ENCODE measurements at regions of chr3 and their contacts with region 1.

Region 1: DNA sequence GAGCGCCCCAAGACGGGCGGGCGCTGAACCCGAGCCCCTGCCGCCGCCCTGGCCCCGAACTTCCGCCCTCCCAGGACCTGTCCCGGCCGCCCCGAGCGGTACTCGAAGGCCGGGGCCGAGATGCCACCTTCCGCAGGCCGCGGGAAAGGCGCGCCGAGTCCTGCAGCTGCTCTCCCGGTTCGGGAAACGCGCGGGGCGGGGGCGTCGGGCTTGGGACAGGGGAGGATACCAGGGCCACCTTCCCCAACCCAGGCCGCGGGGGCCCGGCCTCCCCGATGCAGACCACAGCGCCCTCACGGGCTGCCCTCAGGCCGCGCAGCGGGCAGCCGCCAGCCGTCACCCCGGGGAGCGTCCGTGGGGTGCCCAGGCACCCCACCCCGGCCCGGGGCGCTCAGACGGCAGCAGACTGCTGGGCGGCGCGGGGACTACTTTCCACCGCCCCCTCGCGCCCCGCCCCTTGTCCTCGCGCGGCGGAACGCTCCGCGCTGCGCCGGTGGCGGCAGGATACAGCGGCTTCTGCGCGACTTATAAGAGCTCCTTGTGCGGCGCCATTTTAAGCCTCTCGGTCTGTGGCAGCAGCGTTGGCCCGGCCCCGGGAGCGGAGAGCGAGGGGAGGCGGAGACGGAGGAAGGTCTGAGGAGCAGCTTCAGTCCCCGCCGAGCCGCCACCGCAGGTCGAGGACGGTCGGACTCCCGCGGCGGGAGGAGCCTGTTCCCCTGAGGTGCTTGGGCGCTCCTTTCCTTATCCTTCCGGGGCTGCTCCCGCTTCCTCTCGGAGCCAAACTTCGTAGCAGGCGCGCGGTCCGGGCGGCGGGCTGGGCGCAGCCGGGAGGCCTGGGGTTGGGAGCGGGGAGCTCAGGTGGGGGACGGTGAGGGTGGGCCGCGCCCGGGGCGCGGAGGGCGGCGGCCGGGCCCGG is at the start of gene CTNNB1:
- DNase-seq: peak; percentile 94 to 97 (median 95)
- ATAC-seq: peak; percentile 73 to 96 (median 92)
- H3K4me3 ChIP-seq: peak within 1 kb of the TSS; percentile 47 to 90 (median 84)
- H3K27ac ChIP-seq: peak within 1 kb of the TSS; percentile 95 to 99 (median 98)
- H3K4me1 ChIP-seq: peaks cover 5 to 41% (median 31%) of the 10 kb centered on the region in 12 donors
- H3K27me3 ChIP-seq: no peaks in the 10 kb centered on the region
- CTCF ChIP-seq: peak in 5 of 12 donors; percentile 13 to 33 (median 27)
- POLR2A ChIP-seq: peak in 1 of 2 donors; percentile 93
- total RNA-seq, gene CTNNB1: 145 to 301 (median 208) TPM

Region 2: DNA sequence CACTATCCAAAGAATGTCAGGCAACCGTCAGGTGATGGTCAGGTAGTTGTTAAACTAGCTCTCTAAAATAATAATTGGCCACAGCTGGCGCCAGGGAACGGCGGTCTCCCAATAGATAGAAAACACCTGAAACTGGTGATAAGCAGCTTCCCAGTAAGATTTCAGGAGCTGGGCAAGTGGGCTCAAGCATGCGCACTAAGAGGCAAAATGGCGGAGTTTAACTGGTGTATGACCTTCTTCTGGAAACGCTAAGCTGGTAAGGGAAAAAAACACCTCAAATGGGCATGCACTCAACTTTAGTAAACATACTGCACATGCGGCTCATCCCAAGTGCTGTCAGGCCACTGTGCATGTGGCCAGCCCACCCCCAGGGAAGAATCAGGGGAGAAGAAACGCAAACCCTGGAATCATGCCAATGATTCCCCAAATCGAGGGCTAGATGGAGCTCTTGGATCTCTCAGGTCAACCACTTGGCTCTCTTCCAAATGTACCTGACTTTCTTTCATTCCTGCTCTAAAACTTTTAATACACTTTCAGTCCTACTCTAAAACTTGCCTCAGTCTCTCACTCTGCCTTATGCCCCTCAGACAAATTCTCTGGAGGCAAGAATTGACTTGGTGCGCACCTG is 479.4 kb before region 1 on chr3:
- intact Hi-C with region 1: loop called in 5 of 10 experiments (anchors 5 to 10 kb)
- DNase-seq: no peak
- ATAC-seq: no peak
- H3K4me3 ChIP-seq: no peak overlapping the region
- H3K27ac ChIP-seq: no peak overlapping the region
- H3K4me1 ChIP-seq: peaks cover 0 to 8% (median 0%) of the 10 kb centered on the region in 12 donors
- H3K27me3 ChIP-seq: no peaks in the 10 kb centered on the region
- CTCF ChIP-seq: peak in 11 of 12 donors; percentile 25 to 62 (median 40)
- POLR2A ChIP-seq: no peak

Region 3: GRCh38 chr3:40847551-40847992 is 351.6 kb before region 1 on chr3:
- intact Hi-C with region 1: loop called in 3 of 10 experiments (anchors 10 kb)
- DNase-seq: peak in 3 of 5 donors; percentile 21 to 50 (median 38)
- ATAC-seq: peak; percentile 90 to 92 (median 90)
- H3K4me3 ChIP-seq: no peak overlapping the region
- H3K27ac ChIP-seq: no peak overlapping the region
- H3K4me1 ChIP-seq: peaks cover 0 to 17% (median 3%) of the 10 kb centered on the region in 12 donors
- H3K27me3 ChIP-seq: no peaks in the 10 kb centered on the region
- CTCF ChIP-seq: peak in 10 of 12 donors; percentile 23 to 54 (median 34)
- POLR2A ChIP-seq: no peak

Region 4: GRCh38 chr3:40971191-40972168 is 227.7 kb before region 1 on chr3:
- intact Hi-C with region 1: loop called in 8 of 10 experiments (anchors 5 to 10 kb)
- DNase-seq: peak; percentile 64 to 85 (median 76)
- ATAC-seq: peak; percentile 80 to 96 (median 94)
- H3K4me3 ChIP-seq: no peak overlapping the region
- H3K27ac ChIP-seq: peak overlapping the region; percentile 35 to 88 (median 72)
- H3K4me1 ChIP-seq: peaks cover 8 to 63% (median 54%) of the 10 kb centered on the region in 12 donors
- H3K27me3 ChIP-seq: no peaks in the 10 kb centered on the region
- CTCF ChIP-seq: peak in 1 of 12 donors; percentile 13
- POLR2A ChIP-seq: no peak

Region 5: DNA sequence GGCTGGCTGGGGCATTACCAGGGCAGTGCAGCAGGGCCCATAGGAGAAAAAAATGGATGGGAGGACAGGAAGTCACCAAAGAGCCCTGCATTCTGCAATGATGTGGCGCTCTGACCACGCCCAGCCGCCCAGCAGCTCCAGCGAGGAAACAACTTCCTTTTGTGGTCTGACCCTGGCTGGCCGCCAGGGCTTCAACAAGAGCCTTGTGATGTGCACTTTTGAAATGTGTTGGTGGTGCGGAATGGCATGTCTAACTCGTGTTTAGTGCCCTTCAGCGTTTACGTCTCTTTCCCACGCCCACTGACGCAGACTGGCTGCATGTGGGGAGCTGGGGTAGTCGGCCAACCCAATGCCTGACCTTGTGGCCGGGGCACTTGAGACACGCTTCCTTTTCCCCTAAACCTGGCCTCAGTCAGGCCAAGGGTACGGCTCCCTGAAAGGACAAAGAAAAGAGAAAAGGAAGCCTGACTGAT is 81.8 kb before region 1 on chr3:
- intact Hi-C with region 1: loop called in 4 of 10 experiments (anchors 5 kb)
- DNase-seq: peak; percentile 90 to 95 (median 95)
- ATAC-seq: peak; percentile 87 to 97 (median 95)
- H3K4me3 ChIP-seq: peak overlapping the region in 1 of 12 donors; percentile 5
- H3K27ac ChIP-seq: peak overlapping the region in 10 of 12 donors; percentile 2 to 79 (median 46)
- H3K4me1 ChIP-seq: peaks cover 5 to 36% (median 22%) of the 10 kb centered on the region in 12 donors
- H3K27me3 ChIP-seq: no peaks in the 10 kb centered on the region
- CTCF ChIP-seq: peak in 1 of 12 donors; percentile 2
- POLR2A ChIP-seq: no peak

Region 6: DNA sequence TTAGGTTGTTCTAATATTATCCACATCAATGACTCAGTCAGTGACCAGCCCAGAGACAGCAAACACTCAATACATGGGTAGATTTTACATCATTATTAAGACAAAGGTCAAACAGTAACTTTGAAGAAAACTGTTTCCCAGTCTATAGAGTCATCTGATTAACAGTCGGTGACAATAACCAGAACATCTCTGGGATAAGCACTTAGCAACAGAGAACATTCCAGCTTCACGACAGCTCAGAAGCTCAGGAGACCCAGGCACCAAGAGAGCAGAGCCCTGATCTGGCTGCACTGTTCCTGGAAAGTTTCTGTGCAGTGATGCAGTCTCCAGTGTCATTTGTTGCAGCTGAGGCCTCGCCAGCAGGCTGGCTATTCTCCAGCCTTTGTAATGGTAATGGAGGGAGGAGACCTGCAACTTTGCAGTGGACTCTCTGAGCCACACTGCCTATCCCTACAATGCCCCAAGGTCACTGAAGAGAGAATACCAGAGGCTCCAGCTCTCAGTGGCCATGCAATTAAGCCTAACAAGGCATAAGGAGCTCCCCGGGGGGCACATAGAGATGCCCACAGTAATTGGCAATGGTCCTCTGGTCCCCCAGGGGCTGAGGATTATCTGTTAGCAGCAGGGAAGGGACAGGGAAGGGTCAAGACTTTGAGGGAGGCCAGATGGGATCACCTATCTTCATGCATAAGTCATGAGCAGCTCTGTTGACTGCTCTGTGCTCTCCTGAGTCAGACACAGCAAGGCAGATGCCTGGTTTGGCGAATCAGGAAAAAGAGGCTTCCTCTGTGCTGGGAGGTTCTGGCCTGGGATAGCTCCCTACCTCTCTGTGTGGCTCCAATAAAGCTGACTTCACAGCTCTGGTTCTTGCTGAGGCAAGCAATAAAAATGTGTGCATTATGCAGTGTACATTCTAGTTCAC is 163.7 kb after region 1 on chr3:
- intact Hi-C with region 1: no loop called
- DNase-seq: peak in 2 of 5 donors; percentile 28 to 37
- ATAC-seq: peak in 3 of 4 donors; percentile 22 to 64 (median 53)
- H3K4me3 ChIP-seq: no peak overlapping the region
- H3K27ac ChIP-seq: no peak overlapping the region
- H3K4me1 ChIP-seq: peaks cover 0 to 7% (median 0%) of the 10 kb centered on the region in 12 donors
- H3K27me3 ChIP-seq: no peaks in the 10 kb centered on the region
- CTCF ChIP-seq: no peak
- POLR2A ChIP-seq: no peak